Naive thymus-derived CD4-positive, alpha-beta T cell (primary cell): ENCODE measurements at regions of chr5 and their contacts with region 1.

Region 1: GRCh38 chr5:173144200-173145176 is at the start of gene BNIP1:
- DNase-seq: peak; percentile 92 to 99 (median 96)
- ATAC-seq: peak; percentile 94
- H3K4me3 ChIP-seq: peak within 1 kb of the TSS; percentile 100
- H3K4me3 Mint-ChIP-seq: peak within 1 kb of the TSS; percentile 93 to 99 (median 97)
- H3K27ac ChIP-seq: peak within 1 kb of the TSS; percentile 98
- H3K27ac Mint-ChIP-seq: peak within 1 kb of the TSS; percentile 96 to 99 (median 98)
- H3K4me1 ChIP-seq: no peaks in the 10 kb centered on the region
- H3K4me1 Mint-ChIP-seq: peaks cover 5 to 21% (median 16%) of the 10 kb centered on the region in 7 donors
- H3K27me3 ChIP-seq: no peaks in the 10 kb centered on the region
- H3K27me3 Mint-ChIP-seq: no peaks in the 10 kb centered on the region
- total RNA-seq, gene BNIP1: 5.5 to 23.2 (median 15.3) TPM

Region 2: GRCh38 chr5:171387345-171387969 is 1757.0 kb before region 1 on chr5 and contains the start of gene NPM1:
- CTCF ChIA-PET with region 1: no interaction called
- POLR2A ChIA-PET with region 1: no interaction called
- intact Hi-C with region 1: loop called in 1 of 2 experiments (anchors 1 kb)
- DNase-seq: peak; percentile 90 to 99 (median 98)
- ATAC-seq: peak; percentile 93
- H3K4me3 ChIP-seq: peak within 1 kb of the TSS; percentile 91
- H3K4me3 Mint-ChIP-seq: peak within 1 kb of the TSS; percentile 92 to 99 (median 98)
- H3K27ac ChIP-seq: peak within 1 kb of the TSS; percentile 88
- H3K27ac Mint-ChIP-seq: peak within 1 kb of the TSS; percentile 96 to 100 (median 98)
- H3K4me1 ChIP-seq: peaks cover 31 to 40% of the 10 kb centered on the region in 2 donors
- H3K4me1 Mint-ChIP-seq: peaks cover 25 to 52% (median 49%) of the 10 kb centered on the region in 7 donors
- H3K27me3 ChIP-seq: no peaks in the 10 kb centered on the region
- H3K27me3 Mint-ChIP-seq: peaks cover 0 to 6% (median 0%) of the 10 kb centered on the region in 5 donors
- total RNA-seq, gene NPM1: 807 to 1,238 (median 1,192) TPM

Region 3: GRCh38 chr5:172984243-172984953 is 160.1 kb before region 1 on chr5:
- CTCF ChIA-PET with region 1: interaction called, 22 read pairs
- POLR2A ChIA-PET with region 1: interaction called, 14 read pairs
- intact Hi-C with region 1: loop called (anchors 1 kb)
- DNase-seq: peak; percentile 47 to 90 (median 82)
- ATAC-seq: peak; percentile 86
- H3K4me3 ChIP-seq: peak overlapping the region; percentile 64
- H3K4me3 Mint-ChIP-seq: peak overlapping the region; percentile 88 to 99 (median 97)
- H3K27ac ChIP-seq: peak overlapping the region; percentile 92
- H3K27ac Mint-ChIP-seq: peak overlapping the region; percentile 92 to 99 (median 98)
- H3K4me1 ChIP-seq: peaks cover 16 to 26% of the 10 kb centered on the region in 2 donors
- H3K4me1 Mint-ChIP-seq: peaks cover 20 to 71% (median 48%) of the 10 kb centered on the region in 7 donors
- H3K27me3 ChIP-seq: no peaks in the 10 kb centered on the region
- H3K27me3 Mint-ChIP-seq: no peaks in the 10 kb centered on the region

Region 4: GRCh38 chr5:173204185-173204979 is 59.9 kb after region 1 on chr5:
- CTCF ChIA-PET with region 1: no interaction called
- POLR2A ChIA-PET with region 1: no interaction called
- intact Hi-C with region 1: loop called in 1 of 2 experiments (anchors 2 kb)
- DNase-seq: peak in 5 of 9 donors; percentile 12 to 44 (median 23)
- ATAC-seq: peak; percentile 44
- H3K4me3 ChIP-seq: no peak overlapping the region
- H3K4me3 Mint-ChIP-seq: no peak overlapping the region
- H3K27ac ChIP-seq: no peak overlapping the region
- H3K27ac Mint-ChIP-seq: peak overlapping the region in 1 of 9 donors; percentile 2
- H3K4me1 ChIP-seq: no peaks in the 10 kb centered on the region
- H3K4me1 Mint-ChIP-seq: peaks cover 0 to 4% (median 0%) of the 10 kb centered on the region in 7 donors
- H3K27me3 ChIP-seq: peaks cover 0 to 4% of the 10 kb centered on the region in 2 donors
- H3K27me3 Mint-ChIP-seq: peaks cover 23 to 70% (median 50%) of the 10 kb centered on the region in 5 donors

Region 5: GRCh38 chr5:173331956-173332479 is 187.5 kb after region 1 on chr5:
- CTCF ChIA-PET with region 1: no interaction called
- POLR2A ChIA-PET with region 1: no interaction called
- intact Hi-C with region 1: loop called in 1 of 2 experiments (anchors 1 kb)
- DNase-seq: peak; percentile 29 to 92 (median 59)
- ATAC-seq: peak; percentile 96
- H3K4me3 ChIP-seq: no peak overlapping the region
- H3K4me3 Mint-ChIP-seq: peak overlapping the region in 2 of 10 donors; percentile 10 to 48
- H3K27ac ChIP-seq: no peak overlapping the region
- H3K27ac Mint-ChIP-seq: peak overlapping the region in 1 of 9 donors; percentile 62
- H3K4me1 ChIP-seq: no peaks in the 10 kb centered on the region
- H3K4me1 Mint-ChIP-seq: peaks cover 10 to 33% (median 17%) of the 10 kb centered on the region in 7 donors
- H3K27me3 ChIP-seq: peaks cover 0 to 3% of the 10 kb centered on the region in 2 donors
- H3K27me3 Mint-ChIP-seq: peaks cover 7 to 71% (median 68%) of the 10 kb centered on the region in 5 donors